Activated B cell treated with CpG ODN at 0.5 μM for 24 hours (primary cell): ENCODE measurements at regions of chr6 and their contacts with region 1.

Region 1: DNA sequence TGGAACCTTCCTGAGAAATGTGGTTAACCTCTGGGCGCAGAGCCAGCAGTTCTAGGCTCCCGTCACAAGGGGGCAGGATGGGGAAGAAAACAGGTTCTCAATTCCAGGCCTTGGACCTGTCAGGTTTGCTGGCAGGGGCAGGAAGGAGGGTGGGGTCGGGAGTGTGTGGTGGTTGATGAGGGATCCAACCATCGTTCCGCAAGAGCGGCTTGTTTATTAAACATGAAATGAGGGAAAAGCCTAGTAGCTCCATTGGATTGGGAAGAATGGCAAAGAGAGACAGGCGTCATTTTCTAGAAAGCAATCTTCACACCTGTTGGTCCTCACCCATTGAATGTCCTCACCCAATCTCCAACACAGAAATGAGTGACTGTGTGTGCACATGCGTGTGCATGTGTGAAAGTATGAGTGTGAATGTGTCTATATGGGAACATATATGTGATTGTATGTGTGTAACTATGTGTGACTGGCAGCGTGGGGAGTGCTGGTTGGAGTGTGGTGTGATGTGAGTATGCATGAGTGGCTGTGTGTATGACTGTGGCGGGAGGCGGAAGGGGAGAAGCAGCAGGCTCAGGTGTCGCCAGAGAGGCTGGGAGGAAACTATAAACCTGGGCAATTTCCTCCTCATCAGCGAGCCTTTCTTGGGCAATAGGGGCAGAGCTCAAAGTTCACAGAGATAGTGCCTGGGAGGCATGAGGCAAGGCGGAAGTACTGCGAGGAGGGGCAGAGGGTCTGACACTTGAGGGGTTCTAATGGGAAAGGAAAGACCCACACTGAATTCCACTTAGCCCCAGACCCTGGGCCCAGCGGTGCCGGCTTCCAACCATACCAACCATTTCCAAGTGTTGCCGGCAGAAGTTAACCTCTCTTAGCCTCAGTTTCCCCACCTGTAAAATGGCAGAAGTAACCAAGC is 29.6 kb downstream of the SRSF3 start:
- DNase-seq: peak; percentile 64
- ATAC-seq: peak; percentile 90
- H3K4me3 Mint-ChIP-seq: no peak overlapping the region
- H3K27ac Mint-ChIP-seq: peak overlapping the region; percentile 47
- H3K4me1 Mint-ChIP-seq: peaks cover 29% of the 10 kb centered on the region
- H3K27me3 Mint-ChIP-seq: no peaks in the 10 kb centered on the region
- CTCF ChIP-seq: peak; percentile 51

Region 2: GRCh38 chr6:36701401-36701991 is 77.7 kb after region 1 on chr6:
- CTCF ChIA-PET with region 1: no interaction called
- POLR2A ChIA-PET with region 1: no interaction called
- intact Hi-C with region 1: loop called (anchors 1 kb)
- DNase-seq: no peak
- ATAC-seq: peak; percentile 54
- H3K4me3 Mint-ChIP-seq: no peak overlapping the region
- H3K27ac Mint-ChIP-seq: no peak overlapping the region
- H3K4me1 Mint-ChIP-seq: peaks cover 22% of the 10 kb centered on the region
- H3K27me3 Mint-ChIP-seq: no peaks in the 10 kb centered on the region
- CTCF ChIP-seq: no peak

Region 3: DNA sequence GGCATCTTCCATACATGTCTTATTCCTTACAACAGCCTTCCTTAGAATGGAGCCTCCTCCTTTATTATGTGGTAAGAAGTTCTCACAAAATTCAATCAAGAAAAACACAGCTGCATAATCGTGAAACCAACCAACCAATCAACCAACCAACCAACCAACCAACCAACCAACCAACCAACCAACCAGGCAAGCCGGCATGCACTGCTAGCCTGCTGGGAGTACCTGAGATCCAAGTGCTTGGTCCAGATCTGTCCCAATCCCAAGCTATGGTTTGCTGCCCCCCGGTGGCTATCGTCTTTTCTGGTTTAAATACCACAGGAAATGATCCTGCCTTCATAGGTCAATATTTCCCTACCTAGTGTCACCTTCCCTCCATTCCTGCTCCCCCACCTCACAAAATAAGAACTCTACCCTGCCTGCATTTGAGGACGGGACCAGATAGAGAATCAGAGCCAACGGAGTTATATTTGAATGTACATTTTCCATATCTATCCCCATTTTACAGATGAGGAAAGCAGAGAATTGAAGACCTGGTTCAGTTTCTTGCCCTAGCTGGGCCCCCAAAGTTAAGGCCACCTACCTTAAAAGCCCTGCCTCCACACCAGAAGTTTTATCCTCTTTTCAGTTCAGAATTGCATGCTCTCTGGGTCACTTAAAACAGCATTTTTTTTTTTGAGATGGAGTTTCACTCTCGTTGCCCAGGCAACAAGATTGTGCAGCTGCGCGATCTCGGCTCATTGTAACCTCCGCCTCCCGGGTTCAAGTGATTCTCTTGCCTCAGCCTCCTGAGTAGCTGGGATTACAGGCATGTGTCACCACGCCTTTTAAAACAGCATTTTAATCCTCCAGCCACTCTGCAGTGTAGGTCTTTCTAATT is 100.9 kb after region 1 on chr6:
- CTCF ChIA-PET with region 1: interaction called, 18 read pairs
- POLR2A ChIA-PET with region 1: interaction called, 4 read pairs
- intact Hi-C with region 1: loop called (anchors 1 kb)
- DNase-seq: no peak
- ATAC-seq: peak; percentile 14
- H3K4me3 Mint-ChIP-seq: no peak overlapping the region
- H3K27ac Mint-ChIP-seq: peak overlapping the region; percentile 25
- H3K4me1 Mint-ChIP-seq: peaks cover 57% of the 10 kb centered on the region
- H3K27me3 Mint-ChIP-seq: no peaks in the 10 kb centered on the region
- CTCF ChIP-seq: no peak

Region 4: DNA sequence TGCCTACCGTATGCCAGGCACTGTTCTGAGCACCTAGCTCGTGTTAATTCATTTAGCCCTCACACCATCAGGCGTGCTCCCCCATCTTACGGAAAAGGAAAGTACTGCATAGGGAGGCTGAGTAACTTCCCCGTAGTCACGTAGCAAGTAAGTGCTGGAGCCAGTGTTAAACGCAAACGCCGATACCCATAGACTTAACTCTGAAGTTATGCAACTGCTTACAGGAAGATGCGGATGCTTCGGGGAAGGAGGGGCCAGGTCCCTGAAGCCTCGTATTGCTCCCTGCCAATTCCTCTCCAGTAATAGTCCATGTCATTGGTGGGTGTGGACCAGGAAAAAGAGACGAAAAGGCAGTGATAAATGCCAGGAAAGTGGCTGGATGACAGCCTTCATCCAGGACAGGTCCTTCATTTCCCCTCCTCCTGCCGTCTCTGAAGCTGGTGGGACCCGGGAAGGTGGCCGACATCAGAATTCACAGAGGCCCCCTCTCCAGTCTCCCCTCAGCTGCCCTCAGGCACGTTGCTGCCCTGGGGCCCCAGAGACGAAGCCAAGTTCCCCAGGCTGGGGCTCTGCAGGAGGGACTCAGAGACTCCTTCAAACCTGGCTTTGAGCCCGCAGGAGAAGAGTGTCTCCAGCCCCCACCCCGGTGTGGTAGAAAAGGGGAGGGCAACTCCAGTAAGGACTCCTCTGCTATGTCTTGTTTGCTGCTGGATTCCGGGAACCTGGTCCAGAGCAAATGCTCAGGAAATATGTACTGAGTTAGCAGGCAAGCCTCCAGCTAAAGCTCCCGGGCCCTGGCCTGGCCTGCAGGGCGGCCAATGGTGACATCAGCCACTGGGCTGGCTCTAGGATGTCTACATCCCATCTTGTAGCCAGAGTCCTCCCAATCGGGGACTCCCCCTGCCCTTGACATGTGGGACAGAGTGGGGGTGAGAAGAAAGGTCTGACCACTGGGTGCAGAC is 111.6 kb after region 1 on chr6:
- CTCF ChIA-PET with region 1: no interaction called
- POLR2A ChIA-PET with region 1: no interaction called
- intact Hi-C with region 1: loop called (anchors 1 kb)
- DNase-seq: no peak
- ATAC-seq: peak; percentile 90
- H3K4me3 Mint-ChIP-seq: peak overlapping the region; percentile 72
- H3K27ac Mint-ChIP-seq: peak overlapping the region; percentile 65
- H3K4me1 Mint-ChIP-seq: peaks cover 45% of the 10 kb centered on the region
- H3K27me3 Mint-ChIP-seq: no peaks in the 10 kb centered on the region
- CTCF ChIP-seq: no peak